HEK293 (cell line): ENCODE measurements at regions of chr1 and their contacts with region 1.

Region 1: DNA sequence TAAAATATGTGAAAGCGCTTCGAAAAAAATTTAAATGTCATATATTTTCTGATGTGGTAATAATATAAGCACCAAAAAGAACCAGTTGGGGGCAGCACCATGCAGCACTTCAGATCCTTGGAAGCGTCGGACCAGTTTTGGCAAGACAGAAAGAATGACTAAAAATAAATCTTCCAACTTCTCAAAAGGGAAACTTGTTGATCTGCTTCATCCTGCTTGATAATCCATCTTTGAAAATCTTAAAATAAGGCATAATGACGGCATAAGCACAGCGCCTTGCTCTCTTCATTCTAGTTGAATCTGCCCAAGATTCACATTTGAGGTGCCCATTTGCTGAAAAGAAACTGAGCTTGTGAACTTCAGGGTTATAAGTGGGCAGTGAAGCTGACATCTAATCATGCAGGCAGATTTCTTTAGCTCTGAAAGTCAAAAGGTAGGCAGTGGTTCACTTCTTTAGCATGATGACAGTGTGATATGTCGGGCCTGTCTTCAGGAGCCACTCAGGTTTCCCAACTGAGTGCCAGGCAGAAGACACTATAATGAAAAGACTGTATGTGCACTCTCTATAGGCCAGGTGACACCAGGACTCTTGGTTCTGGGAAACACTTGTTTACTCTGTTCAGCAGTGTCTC is 19.8 kb upstream of the MUTYH start:
- H3K4me3 ChIP-seq: no peak overlapping the region
- H3K27ac ChIP-seq: no peak overlapping the region
- H3K4me1 ChIP-seq: peaks cover 7% of the 10 kb centered on the region; the same call in 1 of the 2 replicates
- CTCF ChIP-seq: no peak

Region 2: GRCh38 chr1:45348716-45349677 is 11.0 kb before region 1 on chr1:
- CTCF ChIA-PET with region 1: interaction called, 23 read pairs
- POLR2A ChIA-PET with region 1: interaction called, 6 read pairs
- H3K4me3 ChIP-seq: no peak overlapping the region
- H3K27ac ChIP-seq: no peak overlapping the region
- H3K4me1 ChIP-seq: no peaks in the 10 kb centered on the region
- CTCF ChIP-seq: no peak

Region 3: DNA sequence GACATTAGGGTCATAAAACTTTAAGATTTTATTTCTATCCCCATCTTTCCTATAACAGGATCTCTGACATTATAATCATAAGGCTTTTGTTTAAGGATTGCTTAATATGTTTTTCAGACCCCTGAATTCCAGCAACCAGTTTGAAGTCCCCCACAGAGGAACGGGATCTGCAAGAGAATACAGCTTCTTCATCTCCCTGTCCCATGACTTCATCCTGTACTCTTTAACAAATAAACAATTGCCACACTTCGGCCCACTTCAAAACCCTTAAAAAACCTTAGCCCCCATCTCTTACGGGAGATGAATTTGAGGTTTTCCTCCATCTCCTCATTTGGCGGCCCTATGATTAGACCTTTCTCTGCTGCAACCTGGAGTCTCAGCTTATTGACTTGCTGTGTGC is 95.2 kb after region 1 on chr1:
- CTCF ChIA-PET with region 1: no interaction called
- POLR2A ChIA-PET with region 1: no interaction called
- H3K4me3 ChIP-seq: no peak overlapping the region
- H3K27ac ChIP-seq: no peak overlapping the region
- H3K4me1 ChIP-seq: no peaks in the 10 kb centered on the region
- CTCF ChIP-seq: no peak

Region 4: GRCh38 chr1:45490626-45491486 is 130.9 kb after region 1 on chr1 and contains the start of gene TESK2:
- CTCF ChIA-PET with region 1: interaction called, 157 read pairs
- POLR2A ChIA-PET with region 1: interaction called, 7 read pairs
- H3K4me3 ChIP-seq: peak within 1 kb of the TSS; percentile 92
- H3K27ac ChIP-seq: peak within 1 kb of the TSS; percentile 66; the same call in 1 of the 2 replicates
- H3K4me1 ChIP-seq: no peaks in the 10 kb centered on the region
- CTCF ChIP-seq: peak; percentile 25; the same call in 1 of the 2 replicates

Region 5: DNA sequence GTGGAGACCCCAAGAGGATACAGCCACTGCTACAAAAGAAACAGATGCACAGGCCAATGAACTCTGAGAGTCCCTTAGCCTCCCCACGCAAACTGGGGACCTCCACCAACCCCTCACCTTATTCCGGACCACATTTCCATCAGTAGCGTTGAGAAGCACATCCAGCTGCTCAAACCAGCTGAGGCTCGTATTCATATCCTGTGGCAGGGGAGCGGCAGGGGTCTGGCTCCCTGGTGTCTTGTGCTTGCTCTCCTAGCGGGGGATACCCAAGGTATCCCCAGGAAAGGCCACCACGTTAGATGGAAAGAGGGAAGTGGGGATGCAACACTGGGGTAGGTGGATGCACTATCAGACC is 139.4 kb after region 1 on chr1:
- CTCF ChIA-PET with region 1: interaction called, 157 read pairs
- POLR2A ChIA-PET with region 1: no interaction called
- H3K4me3 ChIP-seq: peak overlapping the region; percentile 56
- H3K27ac ChIP-seq: no peak overlapping the region; the same call in 1 of the 2 replicates
- H3K4me1 ChIP-seq: no peaks in the 10 kb centered on the region
- CTCF ChIP-seq: no peak